Left ventricle myocardium inferior (tissue), 1 donor: ENCODE measurements at regions of chr4 and their contacts with region 1.

Region 1: DNA sequence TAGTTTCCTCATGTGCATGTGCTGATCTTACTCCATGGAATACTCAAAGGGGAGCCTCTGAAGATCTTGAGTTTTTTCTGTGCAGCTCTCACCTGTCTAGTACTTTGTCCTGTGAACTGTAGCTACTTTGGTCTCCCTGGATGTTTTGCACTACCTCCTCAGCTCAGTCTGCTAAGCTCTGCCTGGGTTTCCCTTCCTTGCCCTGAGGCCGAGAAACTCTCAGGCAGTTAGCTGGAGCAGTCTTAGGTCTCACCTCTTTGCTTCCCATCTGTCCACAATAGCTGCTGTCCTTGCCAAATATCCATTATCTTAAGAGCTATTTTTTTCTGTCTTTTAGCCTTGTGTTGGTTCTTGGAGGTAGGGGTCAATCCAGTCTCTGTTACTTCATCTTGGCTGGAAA is 11.6 kb downstream of the THAP6 start:
- DNase-seq: no peak
- H3K4me3 ChIP-seq: no peak overlapping the region
- H3K27ac ChIP-seq: no peak overlapping the region
- H3K4me1 ChIP-seq: peaks cover 3% of the 10 kb centered on the region
- H3K27me3 ChIP-seq: no peaks in the 10 kb centered on the region
- CTCF ChIP-seq: no peak

Region 2: GRCh38 chr4:75477201-75477600 is 48.7 kb before region 1 on chr4:
- intact Hi-C with region 1: loop called (anchors 10 kb)
- DNase-seq: no peak
- H3K4me3 ChIP-seq: no peak overlapping the region
- H3K27ac ChIP-seq: no peak overlapping the region
- H3K4me1 ChIP-seq: peaks cover 3% of the 10 kb centered on the region
- H3K27me3 ChIP-seq: no peaks in the 10 kb centered on the region
- CTCF ChIP-seq: no peak